Mammary epithelial cell (primary cell): ENCODE measurements at regions of chr4 and their contacts with region 1.

Region 1: GRCh38 chr4:2536193-2537010 is at the start of gene FAM193A:
- DNase-seq: peak; percentile 100
- H3K4me3 ChIP-seq: peak within 1 kb of the TSS; percentile 68 to 87 (median 79)
- H3K27ac ChIP-seq: peak within 1 kb of the TSS; percentile 74
- H3K4me1 ChIP-seq: peaks cover 13% of the 10 kb centered on the region
- H3K27me3 ChIP-seq: no peaks in the 10 kb centered on the region
- CTCF ChIP-seq: no peak
- total RNA-seq, gene FAM193A: 15.5 to 22.2 TPM

Region 2: GRCh38 chr4:2468445-2469192 is 67.8 kb before region 1 on chr4 and contains the start of gene RNF4:
- CTCF ChIA-PET with region 1: no interaction called
- dilution Hi-C with region 1: no loop called
- in situ Hi-C with region 1: no loop called
- intact Hi-C with region 1: loop called (anchors 2 kb)
- DNase-seq: peak; percentile 95
- H3K4me3 ChIP-seq: peak within 1 kb of the TSS; percentile 82 to 98 (median 95)
- H3K27ac ChIP-seq: peak within 1 kb of the TSS; percentile 74
- H3K4me1 ChIP-seq: peaks cover 18% of the 10 kb centered on the region
- H3K27me3 ChIP-seq: no peaks in the 10 kb centered on the region
- CTCF ChIP-seq: no peak
- total RNA-seq, gene RNF4: 57.3 to 60.2 TPM

Region 3: DNA sequence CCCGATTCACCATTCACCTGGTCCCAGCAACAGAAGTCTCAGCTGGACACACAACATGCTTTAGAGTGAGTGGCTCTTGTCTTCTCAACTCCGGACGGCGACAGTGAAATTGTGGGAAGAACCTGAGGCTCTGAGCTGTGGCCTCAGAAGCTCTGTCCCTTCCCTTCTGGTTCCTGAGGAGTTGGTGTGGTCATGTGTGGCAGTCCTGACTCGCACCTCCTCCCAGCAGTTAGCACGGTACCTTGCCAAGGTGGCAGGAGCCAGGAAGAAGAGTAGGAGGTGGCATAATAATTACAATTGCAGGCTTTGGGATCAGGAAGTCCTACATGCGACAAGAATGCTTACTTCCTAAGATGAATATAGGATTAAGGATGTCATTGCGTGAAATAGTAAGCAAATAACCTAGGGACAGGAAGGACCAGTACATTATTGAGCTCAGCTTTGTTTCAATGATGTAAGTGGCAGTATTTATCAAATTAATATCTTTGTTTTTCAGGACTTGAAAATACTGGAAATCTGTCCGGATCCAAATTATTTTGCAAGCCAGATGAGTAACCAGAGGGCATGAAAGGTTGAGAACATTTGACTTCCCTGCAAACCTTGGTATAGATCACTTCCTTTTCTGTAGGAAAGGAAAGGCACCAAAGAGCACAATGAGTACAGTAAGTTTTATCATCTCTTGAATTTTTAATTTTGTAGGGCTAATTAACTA is 46.4 kb before region 1 on chr4:
- CTCF ChIA-PET with region 1: no interaction called
- dilution Hi-C with region 1: loop called (anchors 5 kb)
- in situ Hi-C with region 1: no loop called
- intact Hi-C with region 1: loop called (anchors 5 kb)
- DNase-seq: no peak
- H3K4me3 ChIP-seq: no peak overlapping the region
- H3K27ac ChIP-seq: peak overlapping the region; percentile 38
- H3K4me1 ChIP-seq: peaks cover 7% of the 10 kb centered on the region
- H3K27me3 ChIP-seq: no peaks in the 10 kb centered on the region
- CTCF ChIP-seq: no peak

Region 4: GRCh38 chr4:2497931-2498330 is 38.5 kb before region 1 on chr4:
- CTCF ChIA-PET with region 1: no interaction called
- dilution Hi-C with region 1: loop called (anchors 5 kb)
- in situ Hi-C with region 1: no loop called
- intact Hi-C with region 1: loop called (anchors 5 kb)
- DNase-seq: no peak
- H3K4me3 ChIP-seq: no peak overlapping the region
- H3K27ac ChIP-seq: no peak overlapping the region
- H3K4me1 ChIP-seq: no peaks in the 10 kb centered on the region
- H3K27me3 ChIP-seq: no peaks in the 10 kb centered on the region
- CTCF ChIP-seq: no peak

Region 5: DNA sequence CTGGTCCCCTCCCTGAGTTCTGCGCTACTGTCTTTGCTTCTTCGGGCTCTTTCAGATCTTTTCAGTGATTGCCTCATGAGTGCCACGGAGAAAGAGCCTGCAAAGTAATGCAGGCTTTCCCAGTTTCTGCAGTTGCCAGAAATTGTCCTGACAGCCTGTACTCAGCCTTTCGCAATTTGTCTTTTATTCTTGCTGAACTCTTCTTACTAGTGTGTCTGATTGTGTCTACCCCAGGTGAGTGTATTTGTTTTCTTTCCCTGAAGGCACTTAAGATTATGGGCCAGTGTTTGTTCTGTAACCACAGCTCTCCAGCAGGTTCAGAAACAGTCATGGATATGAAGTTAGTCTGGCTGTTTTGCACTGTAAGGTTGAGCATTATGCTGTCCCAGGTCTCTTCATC is 47.1 kb after region 1 on chr4:
- CTCF ChIA-PET with region 1: no interaction called
- dilution Hi-C with region 1: loop called (anchors 5 kb)
- in situ Hi-C with region 1: no loop called
- intact Hi-C with region 1: no loop called
- DNase-seq: peak; percentile 89
- H3K4me3 ChIP-seq: peak overlapping the region in 1 of 3 experiments; percentile 23
- H3K27ac ChIP-seq: no peak overlapping the region
- H3K4me1 ChIP-seq: peaks cover 17% of the 10 kb centered on the region
- H3K27me3 ChIP-seq: no peaks in the 10 kb centered on the region
- CTCF ChIP-seq: no peak

Region 6: DNA sequence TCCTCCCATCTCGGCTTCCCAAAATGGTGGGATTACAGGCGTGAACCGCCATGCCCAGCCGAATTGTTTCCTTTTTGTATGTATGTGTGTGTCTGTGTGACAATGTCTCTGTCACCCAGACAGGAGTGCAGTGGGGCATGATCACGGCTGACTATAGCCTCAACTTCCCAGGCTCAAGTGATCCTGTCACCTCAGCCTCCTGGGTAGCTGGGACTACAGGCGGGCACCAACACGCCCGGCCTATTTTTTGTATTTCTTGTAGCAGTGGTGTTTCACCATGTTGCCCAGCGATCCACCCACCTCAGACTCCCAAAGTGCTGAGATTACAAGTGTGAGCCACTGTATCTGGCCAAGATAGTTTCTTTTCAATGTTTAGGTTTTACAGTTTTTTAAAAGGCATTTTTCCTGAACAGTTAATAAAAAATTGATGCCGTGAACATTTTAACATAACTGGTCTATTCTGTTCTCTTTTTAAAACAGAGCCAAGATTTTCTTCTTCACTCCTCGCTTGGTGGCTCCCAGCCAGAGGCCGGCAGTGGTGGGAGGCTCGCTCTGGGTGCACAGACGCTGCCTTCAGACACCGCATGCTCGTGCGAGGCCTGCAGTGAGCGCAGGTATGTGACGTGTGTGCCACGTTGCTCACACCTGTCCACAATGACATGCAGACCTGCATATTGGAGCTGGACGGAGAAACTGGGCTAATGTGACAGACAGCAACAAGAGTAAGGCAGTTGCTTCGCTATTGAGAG is 88.6 kb after region 1 on chr4:
- CTCF ChIA-PET with region 1: no interaction called
- dilution Hi-C with region 1: no loop called
- in situ Hi-C with region 1: no loop called
- intact Hi-C with region 1: loop called (anchors 5 kb)
- DNase-seq: peak; percentile 64
- H3K4me3 ChIP-seq: no peak overlapping the region
- H3K27ac ChIP-seq: no peak overlapping the region
- H3K4me1 ChIP-seq: peaks cover 9% of the 10 kb centered on the region
- H3K27me3 ChIP-seq: no peaks in the 10 kb centered on the region
- CTCF ChIP-seq: no peak